ENCODE measurements at regions of chr22 and their contacts with region 1.

Region 1: DNA sequence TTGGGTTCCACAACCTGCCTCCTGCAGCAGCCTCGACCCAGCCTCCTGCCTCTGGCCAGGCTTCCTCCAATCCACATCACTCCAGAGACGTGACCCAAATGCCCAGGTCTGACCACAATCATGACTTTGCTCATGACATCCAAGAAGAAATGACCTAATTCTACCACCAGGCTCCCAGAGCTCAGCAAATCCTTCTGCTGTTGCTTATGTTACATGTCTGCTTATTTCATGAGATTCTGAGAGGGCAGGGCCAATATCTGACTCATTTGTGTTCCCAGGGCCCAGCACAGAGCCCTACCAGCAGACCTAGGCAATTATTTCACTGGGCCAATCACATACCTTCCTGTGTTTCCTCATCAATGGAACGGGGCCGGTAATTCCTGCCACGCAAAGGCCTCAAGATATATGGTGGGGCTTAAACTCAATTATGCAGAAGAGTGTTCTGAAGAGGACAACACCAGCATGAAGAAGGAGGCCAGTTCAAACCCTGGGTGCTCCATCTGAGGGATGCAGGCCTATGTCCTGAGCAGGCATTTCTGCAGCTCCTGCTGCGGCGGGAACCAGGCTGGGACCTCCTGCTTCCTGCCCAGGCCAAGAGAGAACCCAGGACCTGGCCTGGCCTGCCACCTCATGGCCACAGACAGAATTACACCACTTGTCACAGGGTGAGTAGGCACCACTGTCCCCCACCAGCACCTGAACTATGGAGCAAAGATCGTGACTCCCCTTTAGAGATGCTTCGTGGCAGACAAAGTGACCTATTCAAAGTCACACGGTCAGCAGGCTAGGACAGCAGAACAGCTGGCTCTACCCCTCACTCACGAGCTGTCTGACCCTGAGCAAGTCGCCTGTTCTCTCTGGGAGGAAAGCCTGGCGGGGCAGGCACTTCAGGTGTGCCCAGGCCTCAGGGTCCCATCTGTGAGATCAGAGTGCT is 5.9 kb downstream of the CENPM start:
- DNase-seq: peak; percentile 76 to 93 (median 86)
- ATAC-seq: peak; percentile 65
- H3K4me3 ChIP-seq: peak overlapping the region in 1 of 2 experiments; percentile 15
- H3K4me3 Mint-ChIP-seq: peak overlapping the region; percentile 36
- H3K27ac ChIP-seq: peak overlapping the region; percentile 83 to 96
- H3K27ac Mint-ChIP-seq: peak overlapping the region; percentile 98
- H3K4me1 ChIP-seq: peaks cover 29% of the 10 kb centered on the region
- H3K4me1 Mint-ChIP-seq: peaks cover 35% of the 10 kb centered on the region
- H3K27me3 ChIP-seq: no peaks in the 10 kb centered on the region
- H3K27me3 Mint-ChIP-seq: no peaks in the 10 kb centered on the region
- CTCF ChIP-seq: peak; percentile 98

Region 2: GRCh38 chr22:41688365-41689211 is 252.5 kb before region 1 on chr22 and contains the start of gene SNU13:
- CTCF ChIA-PET with region 1: no interaction called
- POLR2A ChIA-PET with region 1: interaction called, 13 read pairs
- intact Hi-C with region 1: loop called (anchors 2 kb)
- DNase-seq: peak; percentile 84 to 97 (median 93)
- ATAC-seq: peak; percentile 92
- H3K4me3 ChIP-seq: peak within 1 kb of the TSS; percentile 90 to 96
- H3K4me3 Mint-ChIP-seq: peak within 1 kb of the TSS; percentile 90
- H3K27ac ChIP-seq: peak within 1 kb of the TSS; percentile 97
- H3K27ac Mint-ChIP-seq: peak within 1 kb of the TSS; percentile 95
- H3K4me1 ChIP-seq: peaks cover 17% of the 10 kb centered on the region
- H3K4me1 Mint-ChIP-seq: peaks cover 30% of the 10 kb centered on the region
- H3K27me3 ChIP-seq: no peaks in the 10 kb centered on the region
- H3K27me3 Mint-ChIP-seq: no peaks in the 10 kb centered on the region
- CTCF ChIP-seq: no peak
- total RNA-seq, gene SNU13: 158 to 173 TPM

Region 3: GRCh38 chr22:41800348-41801146 is 140.6 kb before region 1 on chr22 and contains the start of gene CCDC134:
- CTCF ChIA-PET with region 1: interaction called, 15 read pairs
- POLR2A ChIA-PET with region 1: interaction called, 30 read pairs
- intact Hi-C with region 1: loop called in 1 of 2 experiments (anchors 1 kb)
- DNase-seq: peak; percentile 82 to 95 (median 92)
- ATAC-seq: peak; percentile 96
- H3K4me3 ChIP-seq: peak within 1 kb of the TSS; percentile 97 to 99
- H3K4me3 Mint-ChIP-seq: peak within 1 kb of the TSS; percentile 93
- H3K27ac ChIP-seq: peak within 1 kb of the TSS; percentile 90 to 92
- H3K27ac Mint-ChIP-seq: peak within 1 kb of the TSS; percentile 98
- H3K4me1 ChIP-seq: peaks cover 22% of the 10 kb centered on the region
- H3K4me1 Mint-ChIP-seq: peaks cover 38% of the 10 kb centered on the region
- H3K27me3 ChIP-seq: no peaks in the 10 kb centered on the region
- H3K27me3 Mint-ChIP-seq: no peaks in the 10 kb centered on the region
- CTCF ChIP-seq: no peak
- total RNA-seq, gene CCDC134: 19.1 to 22.5 TPM

Region 4: DNA sequence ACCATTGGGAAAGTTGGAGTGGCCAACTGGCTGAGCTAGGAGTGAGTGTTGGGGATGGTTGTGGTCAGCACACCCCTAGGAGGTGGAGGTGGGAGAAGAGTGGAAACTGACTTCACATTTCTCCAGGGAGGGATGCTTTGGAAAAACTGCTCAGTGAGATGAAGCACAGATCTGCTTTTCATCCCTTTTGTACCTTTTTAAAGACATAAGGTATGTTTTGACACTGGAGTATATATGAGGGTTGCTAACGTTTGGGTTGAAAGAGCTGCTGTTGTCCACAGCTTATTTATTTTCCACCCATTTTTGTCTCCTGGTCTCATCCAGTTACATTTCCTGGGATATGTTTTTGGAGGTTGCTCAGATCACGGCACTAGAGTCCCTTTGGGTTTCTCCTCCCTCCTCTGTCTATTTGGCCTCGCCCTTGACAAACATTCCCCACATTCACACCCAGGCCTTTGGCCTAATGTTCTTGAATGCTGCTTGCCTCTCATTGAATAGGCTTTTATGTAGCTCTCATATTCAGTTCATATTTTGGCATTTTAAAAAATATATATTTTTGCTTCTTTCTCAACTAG is 99.9 kb before region 1 on chr22:
- CTCF ChIA-PET with region 1: interaction called, 16 read pairs
- POLR2A ChIA-PET with region 1: interaction called, 3 read pairs
- intact Hi-C with region 1: no loop called
- DNase-seq: no peak
- ATAC-seq: no peak
- H3K4me3 ChIP-seq: no peak overlapping the region
- H3K4me3 Mint-ChIP-seq: no peak overlapping the region
- H3K27ac ChIP-seq: no peak overlapping the region
- H3K27ac Mint-ChIP-seq: peak overlapping the region; percentile 42
- H3K4me1 ChIP-seq: peaks cover 3% of the 10 kb centered on the region
- H3K4me1 Mint-ChIP-seq: peaks cover 70% of the 10 kb centered on the region
- H3K27me3 ChIP-seq: no peaks in the 10 kb centered on the region
- H3K27me3 Mint-ChIP-seq: no peaks in the 10 kb centered on the region
- CTCF ChIP-seq: no peak

Region 5: DNA sequence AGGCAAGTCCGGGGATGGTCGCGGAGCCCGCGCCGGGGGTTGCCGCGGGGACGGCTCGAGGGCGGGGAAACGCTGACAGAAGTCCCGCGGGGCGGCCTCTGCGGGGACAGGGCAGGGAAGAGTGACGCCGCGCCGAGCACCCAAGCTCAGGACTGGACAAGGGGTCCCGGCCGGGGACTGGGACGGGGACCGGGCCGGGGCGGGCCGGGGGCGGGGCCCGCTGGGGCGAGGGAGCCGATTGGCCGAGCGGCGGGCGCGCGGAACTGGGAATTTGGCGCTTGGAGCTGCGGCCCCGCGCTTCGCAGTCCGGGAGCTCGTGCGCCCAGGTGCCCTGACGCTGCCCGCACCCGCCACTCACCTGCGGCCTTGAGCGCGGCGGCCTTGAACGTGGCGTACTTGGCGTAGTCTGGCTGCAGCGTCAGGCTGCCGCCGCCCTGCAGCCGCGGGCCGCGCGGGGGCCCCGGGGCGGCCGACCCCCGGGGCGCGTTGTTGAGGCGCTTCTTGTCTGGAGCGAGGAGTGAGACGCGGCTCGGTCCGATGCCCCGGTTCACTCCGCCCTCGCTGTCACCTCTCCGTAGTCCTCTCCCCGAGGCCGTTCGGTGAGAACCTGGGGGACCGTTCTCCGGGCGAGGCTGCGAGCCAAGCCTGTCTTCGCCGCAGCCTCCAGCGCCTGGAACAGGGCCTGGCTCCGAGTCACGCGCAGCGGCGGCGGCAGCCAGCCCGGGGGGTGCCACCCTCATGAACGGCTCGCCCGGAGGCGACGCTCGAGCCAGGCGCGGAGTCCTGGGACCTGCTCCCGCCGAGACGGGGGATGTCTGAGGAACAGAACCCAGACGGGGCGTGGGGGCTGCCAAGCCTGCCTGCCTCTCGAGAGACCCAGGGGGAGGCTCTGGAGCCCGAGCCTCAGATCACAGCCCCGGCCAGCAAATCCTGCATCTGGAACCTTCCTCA is 30.8 kb before region 1 on chr22:
- CTCF ChIA-PET with region 1: interaction called, 10 read pairs
- POLR2A ChIA-PET with region 1: interaction called, 6 read pairs
- intact Hi-C with region 1: no loop called
- DNase-seq: peak in 6 of 9 experiments; percentile 28 to 63 (median 57)
- ATAC-seq: peak; percentile 35
- H3K4me3 ChIP-seq: peak overlapping the region; percentile 24 to 30
- H3K4me3 Mint-ChIP-seq: peak overlapping the region; percentile 71
- H3K27ac ChIP-seq: no peak overlapping the region
- H3K27ac Mint-ChIP-seq: no peak overlapping the region
- H3K4me1 ChIP-seq: peaks cover 35% of the 10 kb centered on the region
- H3K4me1 Mint-ChIP-seq: peaks cover 30% of the 10 kb centered on the region
- H3K27me3 ChIP-seq: peaks cover 31 to 41% of the 10 kb centered on the region in 2 experiments
- H3K27me3 Mint-ChIP-seq: peaks cover 26% of the 10 kb centered on the region
- CTCF ChIP-seq: no peak

Region 6: GRCh38 chr22:42022162-42022835 is 81.2 kb after region 1 on chr22:
- CTCF ChIA-PET with region 1: no interaction called
- POLR2A ChIA-PET with region 1: no interaction called
- intact Hi-C with region 1: no loop called
- DNase-seq: no peak
- ATAC-seq: no peak
- H3K4me3 ChIP-seq: no peak overlapping the region
- H3K4me3 Mint-ChIP-seq: no peak overlapping the region
- H3K27ac ChIP-seq: no peak overlapping the region
- H3K27ac Mint-ChIP-seq: no peak overlapping the region
- H3K4me1 ChIP-seq: peaks cover 6% of the 10 kb centered on the region
- H3K4me1 Mint-ChIP-seq: peaks cover 7% of the 10 kb centered on the region
- H3K27me3 ChIP-seq: no peaks in the 10 kb centered on the region
- H3K27me3 Mint-ChIP-seq: peaks cover under 1% of the 10 kb centered on the region
- CTCF ChIP-seq: no peak

Region 7: GRCh38 chr22:42039271-42039670 is 98.2 kb after region 1 on chr22:
- CTCF ChIA-PET with region 1: no interaction called
- POLR2A ChIA-PET with region 1: no interaction called
- intact Hi-C with region 1: no loop called
- DNase-seq: no peak
- ATAC-seq: no peak
- H3K4me3 ChIP-seq: no peak overlapping the region
- H3K4me3 Mint-ChIP-seq: no peak overlapping the region
- H3K27ac ChIP-seq: no peak overlapping the region
- H3K27ac Mint-ChIP-seq: no peak overlapping the region
- H3K4me1 ChIP-seq: no peaks in the 10 kb centered on the region
- H3K4me1 Mint-ChIP-seq: no peaks in the 10 kb centered on the region
- H3K27me3 ChIP-seq: no peaks in the 10 kb centered on the region
- H3K27me3 Mint-ChIP-seq: no peaks in the 10 kb centered on the region
- CTCF ChIP-seq: no peak